ENCODE measurements at regions of chr18 and their contacts with region 1.

Region 1: DNA sequence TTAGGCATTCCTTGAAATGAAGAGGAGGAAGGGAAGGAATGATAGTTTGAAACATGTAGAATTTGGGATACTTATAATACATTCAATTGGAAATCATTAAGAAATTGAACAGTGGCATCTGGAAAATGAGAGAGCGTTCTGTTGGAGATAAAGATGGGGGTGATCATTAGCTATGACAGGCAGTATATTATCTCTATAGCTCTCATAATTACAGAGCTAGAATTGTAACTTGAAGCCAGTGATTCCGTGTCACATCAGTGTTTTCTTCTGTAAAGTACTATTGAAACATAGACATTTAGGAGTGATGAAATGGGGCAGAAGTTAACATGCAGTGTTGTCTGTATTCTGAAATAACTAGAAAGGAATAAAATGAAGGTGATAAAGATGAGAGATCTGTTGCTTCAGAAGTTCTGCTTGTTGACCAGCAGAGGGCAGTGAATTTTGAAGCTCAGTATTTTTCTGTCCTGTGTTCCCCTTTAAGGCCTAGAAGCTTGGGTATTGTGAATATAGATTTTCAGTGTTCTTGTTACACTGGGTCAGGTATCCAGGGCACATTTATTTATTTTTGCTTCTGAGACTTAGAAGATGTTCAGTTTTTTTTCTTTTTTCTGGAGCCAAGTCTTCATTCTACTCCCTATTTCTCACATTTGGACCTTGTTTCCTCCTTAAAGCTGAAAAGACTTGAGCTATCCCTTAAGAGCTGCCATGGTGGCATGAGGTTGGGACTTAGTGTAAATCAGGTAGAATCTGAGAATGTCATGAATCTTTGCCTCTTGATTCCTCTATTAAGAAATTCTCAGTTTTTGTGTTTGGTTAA is 157.4 kb downstream of the TAF4B start:
- DNase-seq: peak; percentile 34
- ATAC-seq: peak; percentile 51
- H3K4me3 Mint-ChIP-seq: no peak overlapping the region
- H3K27ac Mint-ChIP-seq: no peak overlapping the region
- H3K4me1 Mint-ChIP-seq: no peaks in the 10 kb centered on the region
- H3K27me3 Mint-ChIP-seq: no peaks in the 10 kb centered on the region

Region 2: DNA sequence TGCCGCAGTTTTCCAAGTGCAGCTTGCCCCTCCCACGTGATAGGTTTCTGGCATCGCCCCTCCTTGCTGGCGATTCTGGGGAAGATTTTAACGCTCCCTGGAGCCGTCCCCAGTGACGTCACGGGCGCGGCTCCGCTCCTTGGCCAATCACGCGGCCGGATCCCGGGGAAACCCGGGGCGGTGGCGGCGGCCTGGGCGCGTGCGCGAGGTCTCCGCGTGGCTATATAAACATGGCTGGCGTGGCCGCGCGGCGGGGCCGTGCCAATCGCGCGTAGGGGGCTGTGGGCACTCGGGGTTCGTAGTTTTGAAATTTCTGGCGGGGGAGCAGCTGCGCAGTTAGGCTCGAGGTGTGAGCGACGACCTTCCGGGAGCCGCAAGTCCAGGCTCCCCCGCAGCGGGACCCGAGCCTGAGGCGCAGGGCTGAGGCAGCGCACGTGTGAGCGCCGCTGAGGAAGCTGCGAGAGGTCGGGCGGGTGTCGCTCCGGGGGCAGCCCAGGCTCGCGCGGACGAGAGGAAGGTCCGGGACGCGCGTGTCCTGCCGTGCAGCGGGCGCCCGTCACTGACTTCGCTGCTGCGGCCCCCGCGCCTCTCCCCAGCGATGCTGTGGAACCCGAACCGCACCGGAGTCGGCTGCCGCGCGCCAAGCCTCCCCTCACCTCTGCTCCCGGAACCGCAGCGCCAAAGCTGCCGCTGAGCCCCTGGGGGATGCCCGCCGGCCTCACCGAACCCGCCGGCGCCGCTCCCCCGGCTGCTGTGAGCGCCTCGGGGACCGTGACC is 157.2 kb before region 1 on chr18 and contains the start of gene TAF4B:
- CTCF ChIA-PET with region 1: no interaction called
- POLR2A ChIA-PET with region 1: no interaction called
- DNase-seq: peak; percentile 92
- ATAC-seq: peak; percentile 90
- H3K4me3 Mint-ChIP-seq: peak within 1 kb of the TSS; percentile 95
- H3K27ac Mint-ChIP-seq: peak within 1 kb of the TSS; percentile 98
- H3K4me1 Mint-ChIP-seq: peaks cover 35% of the 10 kb centered on the region
- H3K27me3 Mint-ChIP-seq: peaks cover 8% of the 10 kb centered on the region
- total RNA-seq, gene TAF4B: 8.1 to 8.5 TPM

Region 3: DNA sequence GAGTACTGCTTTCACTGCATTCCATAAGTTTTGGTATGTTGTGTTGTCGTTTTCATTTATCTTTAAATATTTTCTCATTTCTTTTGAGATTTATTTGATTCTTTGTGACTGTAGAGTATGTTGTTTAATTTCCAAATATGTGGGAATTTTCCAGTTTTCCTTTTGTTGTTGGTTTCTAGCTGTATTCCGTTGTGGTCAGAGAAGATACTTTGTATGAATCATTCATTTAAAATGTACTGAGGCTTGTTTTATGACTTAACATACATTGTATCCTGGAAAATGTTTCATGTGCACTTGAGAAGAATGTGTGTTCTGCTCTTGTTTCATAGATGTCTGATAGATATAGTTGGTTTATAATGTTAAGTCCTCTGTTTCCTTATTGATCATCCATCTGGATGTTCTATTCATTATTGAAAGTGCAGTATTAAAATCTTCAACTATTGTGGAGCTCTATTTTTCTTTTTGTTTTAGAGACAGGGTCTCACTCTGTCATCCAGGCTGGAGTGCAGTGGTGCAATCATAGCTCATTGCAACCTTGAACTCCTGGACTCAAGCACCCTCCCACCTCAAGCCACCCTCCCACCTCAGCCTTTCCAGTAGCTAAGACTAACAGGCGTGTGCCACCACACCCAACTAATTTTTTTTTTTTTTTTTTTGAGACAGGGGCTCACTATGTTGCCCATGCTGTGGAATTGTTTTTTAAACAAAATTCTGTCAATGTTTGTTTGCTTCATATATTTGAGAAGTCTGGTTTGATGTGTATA is 60.6 kb before region 1 on chr18:
- CTCF ChIA-PET with region 1: interaction called, 12 read pairs
- POLR2A ChIA-PET with region 1: no interaction called
- DNase-seq: no peak
- ATAC-seq: no peak
- H3K4me3 Mint-ChIP-seq: no peak overlapping the region
- H3K27ac Mint-ChIP-seq: no peak overlapping the region
- H3K4me1 Mint-ChIP-seq: no peaks in the 10 kb centered on the region
- H3K27me3 Mint-ChIP-seq: no peaks in the 10 kb centered on the region

Region 4: DNA sequence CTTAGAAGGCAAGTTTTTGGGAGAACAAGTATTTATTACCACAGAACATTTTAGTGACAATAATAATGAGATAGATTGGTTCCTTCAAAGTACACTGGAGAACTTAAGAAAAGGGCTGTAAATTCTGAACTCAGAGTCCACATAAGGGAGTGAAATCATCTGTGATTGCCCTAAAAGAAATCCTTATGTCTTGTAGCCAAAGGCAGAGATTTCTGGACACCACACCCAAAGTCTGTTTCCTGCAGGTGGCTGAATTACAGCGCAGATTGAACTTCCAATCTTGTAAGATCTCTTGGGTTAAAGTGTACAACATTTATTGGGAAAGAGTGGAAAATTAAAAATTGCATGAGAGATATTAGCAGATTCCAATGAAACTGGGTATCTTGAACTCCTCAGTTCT is 13.6 kb before region 1 on chr18:
- CTCF ChIA-PET with region 1: interaction called, 12 read pairs
- POLR2A ChIA-PET with region 1: no interaction called
- DNase-seq: no peak
- ATAC-seq: no peak
- H3K4me3 Mint-ChIP-seq: no peak overlapping the region
- H3K27ac Mint-ChIP-seq: no peak overlapping the region
- H3K4me1 Mint-ChIP-seq: no peaks in the 10 kb centered on the region
- H3K27me3 Mint-ChIP-seq: no peaks in the 10 kb centered on the region

Region 5: DNA sequence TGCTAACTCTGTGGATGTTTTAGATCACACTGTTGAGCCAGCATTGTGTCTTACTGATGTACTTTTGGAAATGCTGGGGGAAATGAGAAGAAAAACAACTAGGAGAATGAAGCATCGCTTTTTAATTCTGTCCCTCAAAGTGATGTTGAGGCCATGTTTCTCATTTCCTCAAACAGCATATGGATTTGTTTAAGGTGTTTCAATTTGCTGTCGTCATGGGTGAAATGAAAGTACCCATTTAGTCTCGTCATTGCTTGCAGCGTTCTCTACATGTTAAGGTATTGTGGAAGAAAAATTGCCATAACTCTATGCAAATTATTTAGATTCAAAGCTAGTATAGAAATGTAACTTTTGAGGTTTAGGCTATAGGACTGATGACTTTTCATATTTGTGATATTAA is 13.4 kb after region 1 on chr18:
- CTCF ChIA-PET with region 1: interaction called, 10 read pairs
- POLR2A ChIA-PET with region 1: no interaction called
- DNase-seq: no peak
- ATAC-seq: no peak
- H3K4me3 Mint-ChIP-seq: no peak overlapping the region
- H3K27ac Mint-ChIP-seq: no peak overlapping the region
- H3K4me1 Mint-ChIP-seq: no peaks in the 10 kb centered on the region
- H3K27me3 Mint-ChIP-seq: no peaks in the 10 kb centered on the region

Region 6: GRCh38 chr18:26429535-26430226 is 46.0 kb after region 1 on chr18:
- CTCF ChIA-PET with region 1: no interaction called
- POLR2A ChIA-PET with region 1: no interaction called
- DNase-seq: no peak
- ATAC-seq: no peak
- H3K4me3 Mint-ChIP-seq: no peak overlapping the region
- H3K27ac Mint-ChIP-seq: no peak overlapping the region
- H3K4me1 Mint-ChIP-seq: no peaks in the 10 kb centered on the region
- H3K27me3 Mint-ChIP-seq: peaks cover 2% of the 10 kb centered on the region

Region 7: DNA sequence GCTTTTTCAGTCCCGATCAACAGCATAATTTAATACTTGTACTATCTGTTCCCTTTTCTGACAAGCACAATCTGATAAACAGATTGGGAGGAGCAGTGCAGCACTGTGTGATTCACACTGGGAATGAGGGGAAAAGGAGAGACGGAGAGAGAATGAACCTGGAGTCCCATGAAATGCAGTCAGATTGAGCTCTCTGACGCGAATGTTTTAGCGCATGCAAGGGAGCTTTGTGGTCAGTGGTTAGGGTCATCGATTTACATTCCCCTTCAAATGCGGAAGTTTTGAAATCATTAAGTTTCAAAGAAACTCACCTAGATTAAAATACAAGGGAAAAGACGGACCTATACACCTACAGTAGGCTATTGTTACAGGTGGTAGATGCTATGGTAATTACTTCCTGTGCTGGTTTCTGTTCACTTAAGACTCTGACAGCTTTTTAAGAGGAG is 65.1 kb after region 1 on chr18:
- CTCF ChIA-PET with region 1: no interaction called
- POLR2A ChIA-PET with region 1: no interaction called
- DNase-seq: no peak
- ATAC-seq: no peak
- H3K4me3 Mint-ChIP-seq: no peak overlapping the region
- H3K27ac Mint-ChIP-seq: no peak overlapping the region
- H3K4me1 Mint-ChIP-seq: no peaks in the 10 kb centered on the region
- H3K27me3 Mint-ChIP-seq: peaks cover 6% of the 10 kb centered on the region

Region 8: GRCh38 chr18:26548429-26549262 is 165.0 kb after region 1 on chr18 and contains the start of gene KCTD1:
- CTCF ChIA-PET with region 1: interaction called, 13 read pairs
- POLR2A ChIA-PET with region 1: no interaction called
- DNase-seq: peak; percentile 81
- ATAC-seq: peak; percentile 74
- H3K4me3 Mint-ChIP-seq: peak within 1 kb of the TSS; percentile 83
- H3K27ac Mint-ChIP-seq: peak within 1 kb of the TSS; percentile 67
- H3K4me1 Mint-ChIP-seq: peaks cover 26% of the 10 kb centered on the region
- H3K27me3 Mint-ChIP-seq: peaks cover 36% of the 10 kb centered on the region
- total RNA-seq, gene KCTD1: 3.0 to 3.5 TPM

Measured in activated CD8-positive, alpha-beta T cell treated with anti-CD3 and anti-CD28 coated beads, Interleukin-2, amount 10 ng/mL, durations not matched to agents 7 days and 5 days (primary cell).